Ascending aorta (tissue), 2 donors: ENCODE measurements at regions of chr6 and their contacts with region 1.

Region 1: DNA sequence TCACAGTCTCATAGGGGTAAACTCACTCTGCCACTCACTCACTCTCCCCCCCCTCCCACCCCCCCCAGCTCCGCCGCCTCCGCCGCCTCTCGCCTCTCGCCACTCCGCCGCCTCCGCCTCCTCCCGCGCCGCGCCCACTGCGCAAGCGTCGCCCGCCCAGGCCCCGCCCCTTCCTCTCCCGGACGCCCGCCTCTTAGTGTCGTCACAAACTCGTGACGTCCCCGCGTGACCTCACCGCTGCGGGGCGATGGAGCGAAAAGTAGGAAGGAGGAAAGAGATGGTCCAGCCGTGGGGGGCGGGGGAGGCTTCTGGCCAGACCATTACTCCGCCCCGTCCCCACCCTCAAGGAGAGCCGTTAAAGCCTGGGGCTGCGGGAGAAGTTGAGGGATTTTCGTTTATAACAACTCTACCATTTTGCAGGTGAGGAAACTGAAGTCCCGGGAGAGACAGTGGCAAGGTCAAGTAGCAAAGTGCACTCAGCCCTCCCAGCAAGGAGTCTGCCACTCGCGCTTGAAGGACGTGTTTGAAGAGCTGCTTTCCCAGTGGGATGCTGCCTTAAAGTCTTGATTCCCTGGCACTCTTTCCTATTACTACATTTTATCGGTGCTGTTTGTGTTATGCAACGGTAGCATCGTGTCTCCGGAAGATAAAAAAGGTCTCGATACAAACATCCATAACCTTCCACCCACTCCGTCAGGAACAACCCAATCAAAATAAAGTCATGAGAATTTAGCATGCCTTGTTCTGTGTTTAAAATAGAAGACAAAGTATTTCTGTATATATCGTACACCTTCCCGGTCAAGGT is at the start of gene ILRUN:
- DNase-seq: peak; percentile 89 to 98
- H3K4me3 ChIP-seq: peak within 1 kb of the TSS; percentile 76 to 82
- H3K27ac ChIP-seq: peak within 1 kb of the TSS; percentile 86 to 88
- H3K4me1 ChIP-seq: peaks cover 10 to 18% of the 10 kb centered on the region in 2 donors
- H3K27me3 ChIP-seq: no peaks in the 10 kb centered on the region
- CTCF ChIP-seq: no peak
- total RNA-seq, gene ILRUN: 69.6 TPM

Region 2: GRCh38 chr6:33570806-33571636 is 1125.9 kb before region 1 on chr6:
- intact Hi-C with region 1: loop called (anchors 5 kb)
- DNase-seq: peak; percentile 49 to 91
- H3K4me3 ChIP-seq: peak overlapping the region; percentile 59 to 90
- H3K27ac ChIP-seq: peak overlapping the region; percentile 78 to 92
- H3K4me1 ChIP-seq: peaks cover 4 to 6% of the 10 kb centered on the region in 2 donors
- H3K27me3 ChIP-seq: no peaks in the 10 kb centered on the region
- CTCF ChIP-seq: no peak

Region 3: DNA sequence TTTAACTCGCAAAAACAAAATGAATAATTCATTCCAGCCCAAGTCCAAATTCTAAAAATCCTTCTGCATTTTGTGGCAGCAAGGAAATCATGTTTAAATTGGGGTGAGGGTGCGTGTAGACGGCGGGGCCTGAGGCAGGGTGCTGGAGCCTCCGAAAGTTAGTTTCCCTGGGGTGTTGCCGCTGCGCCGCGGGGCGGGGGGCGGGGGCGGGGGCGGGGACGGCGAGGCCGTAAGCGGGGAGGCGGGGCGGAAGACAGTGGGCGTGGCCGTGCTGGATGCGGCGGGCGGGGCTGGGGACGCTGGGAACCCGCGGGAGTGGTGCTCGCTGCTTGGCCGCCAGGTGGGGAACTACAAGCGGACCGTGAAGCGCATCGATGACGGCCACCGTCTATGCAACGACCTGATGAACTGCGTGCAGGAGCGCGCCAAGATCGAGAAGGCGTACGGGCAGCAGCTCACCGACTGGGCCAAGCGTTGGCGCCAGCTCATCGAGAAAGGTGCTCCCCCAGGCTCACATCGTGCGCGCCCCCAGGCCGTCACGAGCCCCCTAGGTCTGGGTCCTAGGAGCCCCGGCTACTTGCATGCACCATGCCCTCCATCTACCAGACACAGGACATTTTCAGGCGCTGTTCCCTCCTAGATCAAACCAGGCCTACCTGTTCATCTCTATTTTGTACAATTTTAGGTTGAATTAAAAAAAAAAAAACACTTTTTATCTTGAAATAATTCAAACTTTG is 169.8 kb before region 1 on chr6:
- intact Hi-C with region 1: loop called (anchors 5 kb)
- DNase-seq: peak; percentile 57 to 96
- H3K4me3 ChIP-seq: peak overlapping the region; percentile 37 to 40
- H3K27ac ChIP-seq: peak overlapping the region; percentile 41 to 52
- H3K4me1 ChIP-seq: peaks cover 0 to 8% of the 10 kb centered on the region in 2 donors
- H3K27me3 ChIP-seq: no peaks in the 10 kb centered on the region
- CTCF ChIP-seq: peak; percentile 66 to 85 (median 75)

Region 4: GRCh38 chr6:34656378-34657036 is 40.4 kb before region 1 on chr6:
- intact Hi-C with region 1: loop called (anchors 2 kb)
- DNase-seq: no peak
- H3K4me3 ChIP-seq: peak overlapping the region; percentile 47 to 59
- H3K27ac ChIP-seq: peak overlapping the region; percentile 81 to 87
- H3K4me1 ChIP-seq: peaks cover 7 to 36% of the 10 kb centered on the region in 2 donors
- H3K27me3 ChIP-seq: no peaks in the 10 kb centered on the region
- CTCF ChIP-seq: no peak

Region 5: DNA sequence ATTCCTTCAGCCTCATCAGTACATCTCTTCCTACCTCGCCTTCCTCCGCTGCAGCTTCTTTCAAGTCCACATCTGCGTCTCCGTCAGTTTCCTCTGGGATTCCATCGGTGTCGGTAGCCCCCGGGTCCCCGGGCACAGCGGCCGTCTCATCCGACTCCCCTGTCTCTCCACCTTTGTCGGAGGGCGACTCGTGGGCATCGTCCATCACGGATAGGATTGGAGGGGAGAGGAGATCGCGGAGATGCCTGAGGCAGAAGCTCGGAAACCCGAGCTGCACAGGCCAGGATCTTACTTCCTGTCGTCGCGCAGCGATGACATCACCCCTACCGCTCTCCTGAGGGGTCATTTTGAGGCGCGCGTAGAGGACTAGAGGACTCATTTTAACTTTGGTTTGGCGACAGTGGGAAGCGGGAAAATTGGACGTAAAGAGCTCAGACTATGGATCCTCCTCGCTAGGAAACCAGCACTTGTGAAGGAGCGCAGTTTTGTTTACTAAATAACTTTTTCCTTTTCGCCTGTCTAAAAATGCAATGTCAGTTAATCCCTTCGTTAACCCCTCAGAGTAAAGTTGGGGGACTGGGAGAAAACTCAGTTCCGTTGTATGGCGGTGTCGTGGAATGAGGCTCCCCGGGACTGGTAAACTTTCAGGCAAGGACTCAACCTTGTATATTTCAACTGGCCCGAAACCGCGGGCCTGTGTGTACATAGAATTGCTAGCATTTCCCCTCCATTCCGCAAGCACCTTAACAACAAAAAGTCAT is 191.0 kb after region 1 on chr6 and contains the start of gene TAF11:
- intact Hi-C with region 1: loop called (anchors 2 kb)
- DNase-seq: peak; percentile 85 to 98
- H3K4me3 ChIP-seq: peak within 1 kb of the TSS; percentile 77 to 91
- H3K27ac ChIP-seq: peak within 1 kb of the TSS; percentile 82 to 96
- H3K4me1 ChIP-seq: peaks cover 0 to 7% of the 10 kb centered on the region in 2 donors
- H3K27me3 ChIP-seq: no peaks in the 10 kb centered on the region
- CTCF ChIP-seq: no peak
- total RNA-seq, gene TAF11: 0.85 TPM